B cell (primary cell): ENCODE measurements at regions of chr7 and their contacts with region 1.

Region 1: DNA sequence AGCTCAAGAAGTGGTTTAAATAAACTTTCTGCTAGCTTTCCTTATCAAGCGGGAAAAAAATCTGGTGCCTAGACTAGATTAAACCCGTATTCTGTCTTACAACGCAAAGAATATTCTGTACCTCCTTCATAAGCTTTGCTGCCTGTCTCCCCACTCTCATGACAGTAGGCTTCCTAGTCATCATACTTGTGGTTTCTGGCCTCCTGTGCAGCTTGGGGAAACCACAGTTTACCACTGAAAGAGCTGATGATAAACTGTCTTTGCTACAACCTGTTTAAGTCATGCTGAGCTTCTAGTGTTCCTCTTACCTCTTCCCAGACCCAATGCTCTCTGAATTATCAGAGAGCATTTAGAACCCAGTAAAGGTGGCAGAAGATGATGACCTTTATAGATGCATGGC is 55.0 kb downstream of the PODXL start:
- DNase-seq: peak; percentile 12
- ATAC-seq: no peak
- H3K4me3 ChIP-seq: no peak overlapping the region
- H3K4me3 Mint-ChIP-seq: no peak overlapping the region
- H3K27ac ChIP-seq: no peak overlapping the region
- H3K27ac Mint-ChIP-seq: no peak overlapping the region
- H3K4me1 ChIP-seq: peaks cover 0 to 5% of the 10 kb centered on the region in 2 donors
- H3K4me1 Mint-ChIP-seq: peaks cover 10% of the 10 kb centered on the region
- H3K27me3 ChIP-seq: no peaks in the 10 kb centered on the region
- H3K27me3 Mint-ChIP-seq: no peaks in the 10 kb centered on the region
- CTCF ChIP-seq: no peak

Region 2: GRCh38 chr7:131454538-131454937 is 46.9 kb before region 1 on chr7:
- CTCF ChIA-PET with region 1: no interaction called
- POLR2A ChIA-PET with region 1: no interaction called
- intact Hi-C with region 1: no loop called
- DNase-seq: no peak
- ATAC-seq: no peak
- H3K4me3 ChIP-seq: no peak overlapping the region
- H3K4me3 Mint-ChIP-seq: no peak overlapping the region
- H3K27ac ChIP-seq: no peak overlapping the region
- H3K27ac Mint-ChIP-seq: no peak overlapping the region
- H3K4me1 ChIP-seq: peaks cover 5 to 8% of the 10 kb centered on the region in 2 donors
- H3K4me1 Mint-ChIP-seq: peaks cover 20% of the 10 kb centered on the region
- H3K27me3 ChIP-seq: no peaks in the 10 kb centered on the region
- H3K27me3 Mint-ChIP-seq: no peaks in the 10 kb centered on the region
- CTCF ChIP-seq: no peak

Region 3: DNA sequence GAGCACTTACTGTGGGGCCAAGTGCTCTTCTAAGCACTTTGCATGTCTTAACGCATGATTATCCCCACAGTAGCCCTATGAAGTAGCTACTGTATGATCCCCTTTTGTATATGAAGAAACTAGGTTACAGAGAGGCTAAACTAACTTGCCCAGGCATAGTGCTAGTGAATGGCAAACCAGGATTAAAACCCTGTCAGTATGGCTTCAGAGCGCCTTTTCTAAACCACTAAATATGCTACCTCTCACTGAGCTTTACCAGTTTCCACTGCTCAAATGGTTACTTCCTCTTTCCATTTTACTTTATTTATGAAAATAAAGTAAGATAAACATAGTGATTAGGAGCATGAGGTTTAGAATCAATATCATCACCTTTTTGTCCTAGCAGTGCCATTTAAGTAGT is 18.6 kb before region 1 on chr7:
- CTCF ChIA-PET with region 1: interaction called, 14 read pairs
- POLR2A ChIA-PET with region 1: no interaction called
- intact Hi-C with region 1: no loop called
- DNase-seq: no peak
- ATAC-seq: peak; percentile 17
- H3K4me3 ChIP-seq: no peak overlapping the region
- H3K4me3 Mint-ChIP-seq: no peak overlapping the region
- H3K27ac ChIP-seq: peak overlapping the region in 1 of 2 donors; percentile 34
- H3K27ac Mint-ChIP-seq: no peak overlapping the region
- H3K4me1 ChIP-seq: peaks cover 6 to 9% of the 10 kb centered on the region in 2 donors
- H3K4me1 Mint-ChIP-seq: peaks cover 18% of the 10 kb centered on the region
- H3K27me3 ChIP-seq: no peaks in the 10 kb centered on the region
- H3K27me3 Mint-ChIP-seq: no peaks in the 10 kb centered on the region
- CTCF ChIP-seq: no peak

Region 4: DNA sequence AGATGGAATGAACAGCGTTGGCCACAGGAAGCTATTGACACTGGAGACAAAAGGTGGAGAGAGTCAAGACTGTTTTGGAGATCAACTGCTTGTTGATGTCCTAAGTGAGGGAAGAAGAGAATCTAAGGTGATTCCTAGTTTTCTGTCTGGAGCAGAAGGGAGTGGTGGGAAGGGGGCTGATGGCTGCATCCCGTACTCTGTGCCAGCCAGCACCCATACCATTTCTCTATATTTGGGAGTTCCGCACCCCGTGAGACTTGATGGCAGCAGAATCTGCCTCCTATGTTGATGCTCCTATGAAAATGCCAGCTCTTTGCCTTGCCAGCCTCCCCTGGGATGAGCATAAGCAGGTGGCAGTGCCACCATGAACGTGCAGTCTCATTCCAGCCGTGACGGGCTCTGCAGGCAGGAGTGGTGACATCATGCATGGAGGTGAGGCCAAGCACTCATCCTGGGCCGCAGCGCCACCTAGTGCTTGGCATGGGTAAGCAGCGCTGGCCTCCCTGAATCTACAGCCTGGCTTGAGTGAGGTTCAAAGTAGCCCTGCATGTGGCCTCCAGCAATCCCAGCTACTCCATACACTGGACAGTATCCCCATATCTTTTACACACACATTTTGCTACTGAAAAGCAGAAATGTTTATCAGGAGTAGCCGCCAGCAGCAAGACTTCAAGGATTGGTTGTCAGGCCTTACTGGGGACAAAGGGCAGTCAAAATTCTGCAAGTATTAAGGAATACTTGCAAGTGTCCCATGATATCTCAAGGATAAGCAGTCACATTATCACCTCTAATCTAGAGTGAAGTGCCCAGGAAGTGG is 12.0 kb after region 1 on chr7:
- CTCF ChIA-PET with region 1: interaction called, 43 read pairs
- POLR2A ChIA-PET with region 1: no interaction called
- intact Hi-C with region 1: no loop called
- DNase-seq: peak; percentile 74
- ATAC-seq: peak; percentile 89
- H3K4me3 ChIP-seq: no peak overlapping the region
- H3K4me3 Mint-ChIP-seq: no peak overlapping the region
- H3K27ac ChIP-seq: no peak overlapping the region
- H3K27ac Mint-ChIP-seq: no peak overlapping the region
- H3K4me1 ChIP-seq: peaks cover 3 to 7% of the 10 kb centered on the region in 2 donors
- H3K4me1 Mint-ChIP-seq: peaks cover 13% of the 10 kb centered on the region
- H3K27me3 ChIP-seq: no peaks in the 10 kb centered on the region
- H3K27me3 Mint-ChIP-seq: peaks cover 3% of the 10 kb centered on the region
- CTCF ChIP-seq: peak; percentile 97